ENCODE measurements at regions of chr14 and their contacts with region 1.

Region 1: DNA sequence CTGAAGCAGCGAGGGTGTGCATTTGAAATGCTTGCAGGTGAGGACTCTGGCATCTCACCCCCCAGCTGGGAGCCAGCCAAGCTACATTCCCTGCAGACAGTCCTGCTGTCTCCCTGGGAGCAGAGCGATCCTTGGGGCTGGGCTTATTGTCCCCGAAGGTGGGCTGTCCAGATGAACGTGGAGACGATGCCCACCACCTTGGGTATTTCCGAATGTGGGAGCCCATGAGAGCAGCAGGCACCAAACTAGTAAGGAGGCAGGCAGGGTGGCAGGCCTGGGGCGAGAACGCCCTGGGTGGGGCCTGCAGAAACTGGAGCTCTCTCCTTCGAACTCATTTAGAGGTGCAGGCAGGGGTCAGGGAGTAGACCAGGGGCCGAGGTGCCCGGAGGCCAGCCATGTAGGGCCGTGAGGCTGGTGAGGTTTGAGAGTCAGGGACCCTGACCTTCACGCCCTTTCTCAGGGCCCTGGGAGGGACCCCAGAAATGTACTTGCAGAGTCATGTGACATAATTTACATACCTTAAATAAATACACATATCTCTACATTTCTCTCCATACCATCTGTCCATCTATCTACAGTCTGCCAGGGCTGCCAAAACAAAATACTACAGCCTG is 18.6 kb downstream of the ZBTB42 start:
- DNase-seq: no peak
- H3K4me3 ChIP-seq: no peak overlapping the region
- H3K4me3 Mint-ChIP-seq: no peak overlapping the region
- H3K27ac ChIP-seq: no peak overlapping the region
- H3K27ac Mint-ChIP-seq: no peak overlapping the region
- H3K4me1 ChIP-seq: peaks cover 18% of the 10 kb centered on the region
- H3K4me1 Mint-ChIP-seq: peaks cover 8 to 17% (median 12%) of the 10 kb centered on the region in 3 donors
- H3K27me3 ChIP-seq: no peaks in the 10 kb centered on the region
- H3K27me3 Mint-ChIP-seq: no peaks in the 10 kb centered on the region

Region 2: GRCh38 chr14:104757681-104758392 is 61.6 kb before region 1 on chr14:
- CTCF ChIA-PET with region 1: no interaction called
- POLR2A ChIA-PET with region 1: no interaction called
- DNase-seq: no peak
- H3K4me3 ChIP-seq: no peak overlapping the region
- H3K4me3 Mint-ChIP-seq: peak overlapping the region in 1 of 7 donors; percentile 56
- H3K27ac ChIP-seq: no peak overlapping the region
- H3K27ac Mint-ChIP-seq: peak overlapping the region in 1 of 8 donors; percentile 37
- H3K4me1 ChIP-seq: peaks cover 17% of the 10 kb centered on the region
- H3K4me1 Mint-ChIP-seq: peaks cover 28 to 49% (median 32%) of the 10 kb centered on the region in 3 donors
- H3K27me3 ChIP-seq: no peaks in the 10 kb centered on the region
- H3K27me3 Mint-ChIP-seq: no peaks in the 10 kb centered on the region

Region 3: DNA sequence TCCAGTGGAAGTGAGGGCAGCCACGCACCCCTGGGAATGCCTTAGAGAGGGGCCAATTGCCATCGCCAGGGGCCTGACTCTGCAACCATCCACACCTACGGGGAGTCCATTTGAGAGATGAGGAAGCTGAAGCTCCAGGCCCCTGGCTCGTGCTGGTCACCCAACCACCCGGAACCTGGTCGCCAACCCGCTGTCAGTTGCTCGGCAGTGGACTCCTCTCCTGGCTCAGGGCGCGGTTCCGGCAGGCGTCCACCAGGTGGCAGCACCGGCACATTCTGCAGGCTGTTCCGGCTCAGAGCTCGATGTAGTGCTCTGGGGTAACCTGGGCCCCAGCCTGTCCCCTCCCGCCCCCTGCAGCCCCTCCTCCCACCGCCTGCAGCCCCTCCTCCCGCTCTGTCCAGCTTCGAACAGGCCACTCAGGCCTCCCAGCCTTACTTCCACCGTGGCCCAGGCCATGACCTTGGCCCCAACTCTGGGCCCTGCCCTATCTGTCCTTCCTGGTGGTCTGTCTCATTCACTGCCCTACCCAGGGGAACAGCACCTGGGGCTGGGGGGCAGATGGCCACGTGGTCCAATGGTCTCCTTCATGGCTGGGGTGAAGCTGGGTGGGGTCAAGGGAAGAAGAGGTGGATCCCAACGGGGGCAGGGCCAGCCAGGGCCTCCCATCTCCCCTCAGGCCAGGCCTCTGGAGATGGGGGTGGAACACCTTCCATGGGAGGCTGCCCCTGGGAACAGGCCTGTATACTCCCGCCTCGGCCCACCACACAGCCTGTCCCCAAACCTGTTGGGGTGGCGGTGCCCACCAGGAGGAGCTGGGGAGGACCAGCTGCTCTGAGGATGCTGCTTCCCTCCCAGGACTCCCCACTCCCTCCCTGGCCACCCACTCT is 50.8 kb before region 1 on chr14:
- CTCF ChIA-PET with region 1: interaction called, 11 read pairs
- POLR2A ChIA-PET with region 1: interaction called, 3 read pairs
- DNase-seq: peak; percentile 80 to 91 (median 86)
- H3K4me3 ChIP-seq: no peak overlapping the region
- H3K4me3 Mint-ChIP-seq: no peak overlapping the region
- H3K27ac ChIP-seq: no peak overlapping the region
- H3K27ac Mint-ChIP-seq: peak overlapping the region in 3 of 8 donors; percentile 11 to 75 (median 51)
- H3K4me1 ChIP-seq: no peaks in the 10 kb centered on the region
- H3K4me1 Mint-ChIP-seq: peaks cover 0 to 15% (median 3%) of the 10 kb centered on the region in 3 donors
- H3K27me3 ChIP-seq: no peaks in the 10 kb centered on the region
- H3K27me3 Mint-ChIP-seq: no peaks in the 10 kb centered on the region